ENCODE measurements at regions of chr12 and their contacts with region 1.

Region 1: GRCh38 chr12:66169221-66170170 is at the start of gene TMBIM4:
- DNase-seq: peak; percentile 91 to 97
- ATAC-seq: peak; percentile 99 to 100
- H3K4me3 ChIP-seq: peak within 1 kb of the TSS; percentile 56
- H3K27ac ChIP-seq: peak within 1 kb of the TSS; percentile 94 to 99
- H3K4me1 ChIP-seq: peaks cover 6% of the 10 kb centered on the region
- CTCF ChIP-seq: peak; percentile 57
- EP300 ChIP-seq: no peak
- POLR2A ChIP-seq: peak; percentile 83
- RAD21 ChIP-seq: peak; percentile 32 to 36; a peak in 3 of 5 replicates
- polyA plus RNA-seq, gene TMBIM4: 80.3 and 87.4 TPM in 2 replicates

Region 2: DNA sequence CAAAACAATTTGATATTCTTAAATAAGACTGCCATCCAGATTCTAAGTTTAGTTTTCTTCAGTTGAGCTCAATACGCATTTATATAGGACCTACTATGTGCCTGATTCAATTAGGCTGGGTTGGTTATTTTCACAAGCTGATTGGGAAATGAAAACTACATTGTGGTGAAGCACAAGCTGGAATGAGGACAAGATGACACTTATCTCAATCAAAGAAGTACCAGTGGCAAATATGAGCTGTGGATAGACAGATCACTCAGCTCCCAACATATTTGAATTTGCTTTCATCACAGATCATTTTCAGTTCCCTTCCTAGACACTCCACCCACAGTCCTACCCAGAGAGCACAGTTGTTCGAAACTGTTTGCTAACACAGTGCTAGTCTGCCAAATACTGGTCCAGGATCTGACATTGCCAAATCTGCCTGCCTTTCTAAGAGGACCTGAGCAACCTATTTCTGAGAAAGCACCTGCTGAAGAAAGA is 113.6 kb before region 1 on chr12:
- CTCF ChIA-PET with region 1: no interaction called
- POLR2A ChIA-PET with region 1: no interaction called
- DNase-seq: no peak
- ATAC-seq: no peak
- H3K4me3 ChIP-seq: no peak overlapping the region
- H3K27ac ChIP-seq: no peak overlapping the region
- H3K4me1 ChIP-seq: no peaks in the 10 kb centered on the region
- CTCF ChIP-seq: no peak
- EP300 ChIP-seq: no peak
- POLR2A ChIP-seq: no peak
- RAD21 ChIP-seq: no peak

Region 3: DNA sequence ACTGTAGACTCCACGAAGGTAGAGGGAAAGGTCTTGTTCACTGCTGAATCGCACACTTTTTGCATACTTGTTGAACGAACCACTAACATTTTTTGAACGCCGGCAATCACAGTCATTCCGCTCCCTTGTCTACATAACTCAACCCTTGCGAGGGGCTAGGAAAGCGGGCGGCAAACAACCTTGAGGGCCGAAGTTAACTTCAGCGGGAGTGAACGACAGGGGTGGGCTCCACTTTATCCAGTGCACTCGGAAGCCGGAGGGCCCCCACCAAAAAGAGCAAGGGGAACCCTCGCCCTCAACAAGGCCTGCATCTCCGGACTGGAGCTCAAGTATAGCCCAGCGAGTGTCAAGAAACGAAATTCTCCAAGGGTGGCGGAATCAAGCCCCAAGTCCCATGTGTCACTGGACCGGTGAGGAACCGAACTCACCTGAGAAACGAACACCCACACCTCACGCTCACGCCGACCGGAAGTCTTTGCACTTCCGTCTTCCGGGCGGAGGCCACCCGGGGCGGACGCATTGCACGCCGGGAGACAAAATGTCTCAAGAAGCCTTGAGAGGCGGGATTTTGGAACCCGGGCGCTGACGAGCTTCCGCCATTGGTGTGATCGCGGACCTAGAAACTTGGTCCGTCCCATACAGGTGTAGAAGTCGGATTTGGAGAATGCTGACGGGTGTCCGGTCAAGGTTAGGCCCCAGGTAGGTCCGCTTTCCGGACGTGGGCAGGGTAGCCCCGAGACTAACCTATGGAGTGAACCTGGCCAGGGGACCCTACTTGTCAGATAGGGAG is 39.0 kb before region 1 on chr12 and contains the start of gene LLPH:
- CTCF ChIA-PET with region 1: interaction called, 8 read pairs
- POLR2A ChIA-PET with region 1: interaction called, 30 read pairs
- DNase-seq: peak; percentile 92 to 94
- ATAC-seq: peak; percentile 97 to 99
- H3K4me3 ChIP-seq: peak within 1 kb of the TSS; percentile 82
- H3K27ac ChIP-seq: peak within 1 kb of the TSS; percentile 72 to 89
- H3K4me1 ChIP-seq: peaks cover 22% of the 10 kb centered on the region; the same call in 2 of the 3 replicates
- CTCF ChIP-seq: no peak
- EP300 ChIP-seq: no peak
- POLR2A ChIP-seq: peak; percentile 89
- RAD21 ChIP-seq: no peak
- polyA plus RNA-seq, gene LLPH: 31.6 and 54.5 TPM in 2 replicates

Region 4: GRCh38 chr12:66144791-66145754 is 24.4 kb before region 1 on chr12:
- CTCF ChIA-PET with region 1: interaction called, 9 read pairs
- POLR2A ChIA-PET with region 1: interaction called, 10 read pairs
- DNase-seq: peak; percentile 37 to 78
- ATAC-seq: peak; percentile 68 to 89
- H3K4me3 ChIP-seq: no peak overlapping the region
- H3K27ac ChIP-seq: peak overlapping the region in 1 of 2 experiments; percentile 37; a peak in 1 of 6 replicates
- H3K4me1 ChIP-seq: no peaks in the 10 kb centered on the region; the same call in 2 of the 3 replicates
- CTCF ChIP-seq: peak; percentile 66
- EP300 ChIP-seq: no peak
- POLR2A ChIP-seq: no peak
- RAD21 ChIP-seq: peak; percentile 64 to 73

Region 5: GRCh38 chr12:66156654-66157053 is 12.8 kb before region 1 on chr12:
- CTCF ChIA-PET with region 1: interaction called, 16 read pairs
- POLR2A ChIA-PET with region 1: interaction called, 16 read pairs
- DNase-seq: no peak
- ATAC-seq: no peak
- H3K4me3 ChIP-seq: no peak overlapping the region
- H3K27ac ChIP-seq: no peak overlapping the region
- H3K4me1 ChIP-seq: no peaks in the 10 kb centered on the region
- CTCF ChIP-seq: no peak
- EP300 ChIP-seq: no peak
- POLR2A ChIP-seq: no peak
- RAD21 ChIP-seq: no peak

Region 6: GRCh38 chr12:66188584-66189485 is 19.3 kb after region 1 on chr12 and contains the start of gene IRAK3:
- CTCF ChIA-PET with region 1: interaction called, 6 read pairs
- POLR2A ChIA-PET with region 1: interaction called, 12 read pairs
- DNase-seq: peak in 1 of 2 experiments; percentile 21
- ATAC-seq: peak; percentile 78 to 83; a peak in 5 of 6 replicates
- H3K4me3 ChIP-seq: peak within 1 kb of the TSS; percentile 42
- H3K27ac ChIP-seq: peak within 1 kb of the TSS; percentile 55 to 76; a peak in 5 of 6 replicates
- H3K4me1 ChIP-seq: no peaks in the 10 kb centered on the region
- CTCF ChIP-seq: no peak
- EP300 ChIP-seq: no peak
- POLR2A ChIP-seq: no peak
- RAD21 ChIP-seq: no peak
- polyA plus RNA-seq, gene IRAK3: 0.25 and 0.30 TPM in 2 replicates

Region 7: GRCh38 chr12:66235626-66236281 is 66.3 kb after region 1 on chr12:
- CTCF ChIA-PET with region 1: interaction called, 8 read pairs
- POLR2A ChIA-PET with region 1: interaction called, 15 read pairs
- DNase-seq: peak; percentile 27 to 66
- ATAC-seq: peak in 1 of 2 experiments; percentile 49; a peak in 2 of 6 replicates
- H3K4me3 ChIP-seq: peak overlapping the region; percentile 83
- H3K27ac ChIP-seq: peak overlapping the region; percentile 62 to 82; a peak in 5 of 6 replicates
- H3K4me1 ChIP-seq: peaks cover 3% of the 10 kb centered on the region; the same call in 1 of the 3 replicates
- CTCF ChIP-seq: no peak
- EP300 ChIP-seq: no peak
- POLR2A ChIP-seq: no peak
- RAD21 ChIP-seq: no peak

Region 8: DNA sequence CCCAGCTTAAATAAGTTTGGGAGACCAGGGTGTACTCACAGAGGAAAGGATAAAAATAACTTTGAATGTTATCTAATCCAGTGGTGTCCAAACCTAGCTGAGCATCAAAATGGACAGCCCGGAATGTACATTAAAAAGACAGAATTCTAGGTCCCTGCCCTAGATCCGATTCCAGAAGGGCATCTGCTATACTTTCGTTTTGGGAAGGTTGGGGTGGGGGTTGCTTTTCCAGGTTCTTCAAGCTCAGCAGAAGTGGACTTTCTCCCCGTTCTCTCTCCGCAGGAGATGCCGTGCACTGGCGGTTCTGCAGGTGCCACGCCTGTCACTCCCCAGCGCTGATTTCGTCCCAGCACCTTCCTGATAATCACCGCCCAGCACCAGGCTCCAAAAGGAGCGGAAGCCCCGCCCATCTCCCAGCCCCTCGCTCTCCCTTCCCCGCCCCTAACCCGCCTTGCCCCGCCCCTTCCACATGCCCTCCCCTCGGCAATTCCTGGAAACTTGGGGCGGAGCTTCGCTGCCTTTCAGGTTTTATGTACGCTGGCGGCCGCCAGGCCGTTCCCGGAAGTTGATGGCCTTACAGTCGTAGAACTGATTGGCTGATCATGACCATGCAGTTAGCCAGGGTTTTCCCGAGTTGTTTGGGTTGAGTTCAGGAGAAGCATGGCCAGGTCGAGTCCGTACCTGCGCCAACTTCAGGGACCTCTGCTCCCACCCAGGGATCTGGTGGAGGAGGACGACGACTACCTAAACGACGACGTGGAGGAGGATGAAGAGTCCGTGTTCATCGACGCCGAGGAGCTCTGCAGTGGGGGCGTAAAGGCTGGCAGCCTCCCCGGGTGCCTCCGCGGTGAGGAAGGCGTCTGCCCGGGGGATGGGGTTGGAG is 132.7 kb after region 1 on chr12 and contains the start of gene HELB:
- CTCF ChIA-PET with region 1: no interaction called
- POLR2A ChIA-PET with region 1: interaction called, 21 read pairs
- DNase-seq: peak; percentile 90 to 98
- ATAC-seq: peak; percentile 98 to 99
- H3K4me3 ChIP-seq: peak within 1 kb of the TSS; percentile 63
- H3K27ac ChIP-seq: peak within 1 kb of the TSS; percentile 79 to 91
- H3K4me1 ChIP-seq: peaks cover 12% of the 10 kb centered on the region; the same call in 2 of the 3 replicates
- CTCF ChIP-seq: no peak
- EP300 ChIP-seq: no peak
- POLR2A ChIP-seq: peak; percentile 85
- RAD21 ChIP-seq: no peak
- polyA plus RNA-seq, gene HELB: 5.0 and 5.6 TPM in 2 replicates